B cell (primary cell): ENCODE measurements at regions of chr16 and their contacts with region 1.

Region 1: GRCh38 chr16:30065143-30065850 is at the start of gene ALDOA:
- DNase-seq: peak; percentile 97
- ATAC-seq: peak; percentile 83
- H3K4me3 ChIP-seq: peak within 1 kb of the TSS; percentile 73 to 96 (median 87)
- H3K4me3 Mint-ChIP-seq: peak within 1 kb of the TSS; percentile 100
- H3K27ac ChIP-seq: peak within 1 kb of the TSS; percentile 82 to 88
- H3K27ac Mint-ChIP-seq: peak within 1 kb of the TSS; percentile 99
- H3K4me1 ChIP-seq: peaks cover 16 to 42% of the 10 kb centered on the region in 2 donors
- H3K4me1 Mint-ChIP-seq: peaks cover 31% of the 10 kb centered on the region
- H3K27me3 ChIP-seq: no peaks in the 10 kb centered on the region
- H3K27me3 Mint-ChIP-seq: no peaks in the 10 kb centered on the region
- CTCF ChIP-seq: no peak
- total RNA-seq, gene ALDOA: 301 and 329 TPM in 2 replicates

Region 2: DNA sequence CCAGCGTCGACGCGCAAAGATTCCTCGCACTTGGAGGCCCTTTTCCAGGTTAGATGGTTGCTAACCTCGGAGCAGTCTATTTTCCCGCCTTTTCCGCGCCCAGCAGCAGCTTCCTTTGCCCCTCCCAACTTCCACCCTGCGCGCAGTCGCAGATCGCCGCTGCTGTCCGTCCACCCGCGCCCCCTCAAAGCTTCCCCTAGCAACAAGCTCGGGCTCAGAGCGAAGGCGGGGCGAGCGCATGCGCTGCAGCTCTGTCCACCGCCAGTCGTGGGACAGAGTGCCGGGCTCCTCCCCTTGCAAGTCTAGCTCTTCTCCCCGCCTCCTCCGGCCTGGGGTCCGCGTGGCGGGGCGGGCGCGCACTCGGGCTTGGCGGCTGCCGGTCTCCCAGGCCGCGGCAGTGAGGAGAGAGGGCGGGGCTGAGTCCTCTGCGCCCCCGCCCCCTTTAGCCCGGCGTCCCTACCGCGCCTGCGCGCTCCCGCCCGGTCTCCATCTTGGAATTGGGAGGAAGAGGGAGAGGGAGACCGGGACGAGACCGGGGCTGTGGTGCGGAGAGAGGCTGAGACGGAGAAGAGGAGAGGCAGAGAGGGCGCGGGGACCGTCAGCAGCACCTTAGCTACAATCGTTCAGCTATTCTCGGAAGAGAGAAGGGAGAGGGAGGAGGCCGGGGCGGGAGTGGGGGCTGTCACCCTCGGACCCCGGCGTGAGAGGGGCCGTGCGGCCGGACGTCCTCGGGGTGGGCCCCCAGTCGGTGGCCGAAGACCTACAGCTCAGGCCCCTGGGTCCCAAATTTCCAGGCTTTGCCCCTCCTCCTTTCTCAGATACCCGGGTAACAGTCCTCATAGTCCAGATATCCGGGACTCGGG is 91.7 kb before region 1 on chr16 and contains the start of gene TAOK2:
- CTCF ChIA-PET with region 1: no interaction called
- POLR2A ChIA-PET with region 1: no interaction called
- intact Hi-C with region 1: loop called (anchors 1 kb)
- DNase-seq: peak; percentile 98
- ATAC-seq: peak; percentile 99
- H3K4me3 ChIP-seq: peak within 1 kb of the TSS; percentile 79 to 100 (median 99)
- H3K4me3 Mint-ChIP-seq: peak within 1 kb of the TSS; percentile 95
- H3K27ac ChIP-seq: peak within 1 kb of the TSS; percentile 73 to 79
- H3K27ac Mint-ChIP-seq: peak within 1 kb of the TSS; percentile 94
- H3K4me1 ChIP-seq: peaks cover 31 to 38% of the 10 kb centered on the region in 2 donors
- H3K4me1 Mint-ChIP-seq: peaks cover 36% of the 10 kb centered on the region
- H3K27me3 ChIP-seq: no peaks in the 10 kb centered on the region
- H3K27me3 Mint-ChIP-seq: no peaks in the 10 kb centered on the region
- CTCF ChIP-seq: no peak
- total RNA-seq, gene TAOK2: 50.8 and 51.9 TPM in 2 replicates

Region 3: GRCh38 chr16:29995911-29996772 is 69.2 kb before region 1 on chr16 and contains the start of gene INO80E:
- CTCF ChIA-PET with region 1: interaction called, 3 read pairs
- POLR2A ChIA-PET with region 1: no interaction called
- intact Hi-C with region 1: loop called (anchors 2 kb)
- DNase-seq: peak; percentile 97
- ATAC-seq: peak; percentile 96
- H3K4me3 ChIP-seq: peak within 1 kb of the TSS; percentile 89 to 100 (median 98)
- H3K4me3 Mint-ChIP-seq: peak within 1 kb of the TSS; percentile 98
- H3K27ac ChIP-seq: peak within 1 kb of the TSS; percentile 94 to 97
- H3K27ac Mint-ChIP-seq: peak within 1 kb of the TSS; percentile 94
- H3K4me1 ChIP-seq: peaks cover 15 to 22% of the 10 kb centered on the region in 2 donors
- H3K4me1 Mint-ChIP-seq: peaks cover 43% of the 10 kb centered on the region
- H3K27me3 ChIP-seq: no peaks in the 10 kb centered on the region
- H3K27me3 Mint-ChIP-seq: no peaks in the 10 kb centered on the region
- CTCF ChIP-seq: no peak
- total RNA-seq, gene INO80E: 113 and 119 TPM in 2 replicates

Region 4: DNA sequence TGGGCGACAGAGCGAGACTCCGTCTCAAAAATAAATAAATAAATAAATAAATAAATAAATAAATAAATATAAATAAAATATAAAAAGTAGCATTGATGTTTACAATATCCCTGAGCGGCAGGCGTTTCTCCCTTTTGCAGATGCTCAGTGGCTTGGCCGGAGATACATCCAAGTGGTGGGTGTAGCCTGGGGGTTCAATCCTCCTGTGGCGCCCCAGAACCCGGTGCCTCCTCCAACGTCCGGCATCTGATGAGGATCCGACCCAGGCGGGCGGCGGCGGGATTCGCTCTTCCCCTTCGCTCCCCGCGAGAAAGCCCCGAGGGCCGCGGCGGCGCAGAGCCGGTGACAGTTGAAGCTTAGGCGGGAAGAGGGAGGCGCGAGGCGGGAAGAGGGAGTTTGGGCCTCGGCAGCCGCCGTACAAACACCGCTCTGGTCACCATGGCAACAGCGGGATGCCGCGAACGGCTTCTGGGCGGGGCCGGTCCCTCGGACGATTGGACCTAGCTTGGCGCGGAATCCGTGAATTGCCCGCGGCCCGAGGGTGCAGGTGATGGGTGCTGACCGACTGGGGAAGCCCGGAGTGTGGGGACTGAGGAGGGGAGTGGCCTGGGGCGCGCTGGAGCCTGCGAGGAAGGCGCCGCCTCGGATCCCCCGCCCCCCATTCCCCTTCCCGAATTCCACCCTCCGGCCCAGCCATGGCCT is 12.5 kb before region 1 on chr16:
- CTCF ChIA-PET with region 1: interaction called, 4 read pairs
- POLR2A ChIA-PET with region 1: interaction called, 8 read pairs
- intact Hi-C with region 1: loop called (anchors 1 kb)
- DNase-seq: peak; percentile 92
- ATAC-seq: peak; percentile 87
- H3K4me3 ChIP-seq: peak overlapping the region; percentile 9 to 70 (median 63)
- H3K4me3 Mint-ChIP-seq: peak overlapping the region; percentile 87
- H3K27ac ChIP-seq: peak overlapping the region in 1 of 2 donors; percentile 5
- H3K27ac Mint-ChIP-seq: peak overlapping the region; percentile 82
- H3K4me1 ChIP-seq: peaks cover 5 to 12% of the 10 kb centered on the region in 2 donors
- H3K4me1 Mint-ChIP-seq: peaks cover 13% of the 10 kb centered on the region
- H3K27me3 ChIP-seq: peaks cover 0 to 3% (median 0%) of the 10 kb centered on the region in 4 experiments
- H3K27me3 Mint-ChIP-seq: no peaks in the 10 kb centered on the region
- CTCF ChIP-seq: no peak

Region 5: DNA sequence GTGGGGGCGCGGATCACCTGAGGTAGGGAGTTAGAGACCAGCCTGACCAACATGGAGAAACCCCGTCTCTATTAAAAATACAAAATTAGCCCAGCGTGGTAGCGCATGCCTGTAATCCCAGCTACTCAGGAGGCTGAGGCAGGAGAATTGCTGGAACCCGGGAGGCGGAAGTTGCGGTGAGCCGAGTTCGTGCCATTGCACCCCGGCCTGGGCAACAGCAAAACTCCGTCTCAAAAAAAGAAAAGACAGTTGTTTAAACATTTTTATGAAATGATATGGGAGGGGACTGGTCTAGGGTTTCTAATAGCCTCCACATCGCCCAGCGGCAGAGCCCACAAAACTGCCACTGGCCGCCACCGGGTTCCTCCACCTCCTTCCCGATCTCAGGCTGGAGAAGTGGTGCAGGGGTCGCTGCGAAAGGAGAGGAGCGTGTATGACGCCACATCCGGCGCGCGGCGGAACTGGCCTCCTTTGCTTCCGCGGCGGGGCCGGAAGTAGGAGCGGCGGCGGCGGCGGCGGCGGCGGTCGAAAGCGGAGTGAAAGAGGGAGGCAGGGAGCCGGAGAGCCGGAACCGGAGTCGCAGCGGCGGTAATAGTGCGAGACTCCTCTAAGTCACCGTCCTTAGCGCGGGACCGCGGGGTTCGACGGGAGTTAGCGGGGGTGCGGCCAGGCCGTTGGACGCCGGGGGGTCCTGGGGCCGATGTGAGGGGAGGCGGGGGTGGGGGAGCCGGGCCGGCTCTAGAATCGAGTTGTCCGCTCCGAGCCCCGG is 10.4 kb after region 1 on chr16 and contains the start of gene PPP4C:
- CTCF ChIA-PET with region 1: interaction called, 5 read pairs
- POLR2A ChIA-PET with region 1: interaction called, 7 read pairs
- intact Hi-C with region 1: loop called (anchors 1 kb)
- DNase-seq: peak; percentile 93
- ATAC-seq: peak; percentile 89
- H3K4me3 ChIP-seq: peak within 1 kb of the TSS; percentile 65 to 98 (median 90)
- H3K4me3 Mint-ChIP-seq: peak within 1 kb of the TSS; percentile 98
- H3K27ac ChIP-seq: peak within 1 kb of the TSS; percentile 67 to 90
- H3K27ac Mint-ChIP-seq: peak within 1 kb of the TSS; percentile 98
- H3K4me1 ChIP-seq: peaks cover 14 to 25% of the 10 kb centered on the region in 2 donors
- H3K4me1 Mint-ChIP-seq: peaks cover 31% of the 10 kb centered on the region
- H3K27me3 ChIP-seq: no peaks in the 10 kb centered on the region
- H3K27me3 Mint-ChIP-seq: no peaks in the 10 kb centered on the region
- CTCF ChIP-seq: no peak
- total RNA-seq, gene PPP4C: 89.0 and 93.3 TPM in 2 replicates

Region 6: DNA sequence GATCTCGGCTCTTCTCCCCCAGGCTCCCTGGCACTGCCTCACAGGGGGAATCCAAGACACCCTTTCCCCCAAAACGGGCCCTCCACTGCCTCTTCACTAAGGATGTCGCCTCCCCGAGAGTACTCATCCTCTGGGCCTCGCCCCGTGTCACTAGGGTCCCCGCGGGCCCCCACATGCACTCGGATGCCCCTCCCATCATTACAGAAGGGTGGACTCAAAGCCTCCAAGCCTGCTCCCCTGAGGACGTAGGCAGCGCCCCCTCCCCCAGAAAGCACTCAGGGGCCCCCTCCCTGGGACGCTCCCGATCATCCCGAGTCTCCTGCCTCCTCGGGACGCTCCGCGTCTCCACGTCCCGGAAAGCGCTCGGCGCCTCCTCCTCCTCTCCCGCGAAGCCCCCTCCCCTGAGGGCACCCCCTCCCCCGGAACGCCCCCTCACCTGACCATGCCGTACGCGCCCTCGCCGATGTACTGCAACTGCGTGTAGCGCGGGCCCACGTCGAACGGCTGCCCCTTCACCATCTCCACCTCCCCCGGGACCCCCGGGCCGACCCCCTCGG is 57.4 kb after region 1 on chr16:
- CTCF ChIA-PET with region 1: no interaction called
- POLR2A ChIA-PET with region 1: no interaction called
- intact Hi-C with region 1: loop called (anchors 2 kb)
- DNase-seq: peak; percentile 50
- ATAC-seq: peak; percentile 9
- H3K4me3 ChIP-seq: peak overlapping the region; percentile 38 to 79 (median 75)
- H3K4me3 Mint-ChIP-seq: peak overlapping the region; percentile 86
- H3K27ac ChIP-seq: peak overlapping the region; percentile 38 to 74
- H3K27ac Mint-ChIP-seq: peak overlapping the region; percentile 81
- H3K4me1 ChIP-seq: peaks cover 18 to 24% of the 10 kb centered on the region in 2 donors
- H3K4me1 Mint-ChIP-seq: peaks cover 24% of the 10 kb centered on the region
- H3K27me3 ChIP-seq: no peaks in the 10 kb centered on the region
- H3K27me3 Mint-ChIP-seq: no peaks in the 10 kb centered on the region
- CTCF ChIP-seq: no peak

Region 7: DNA sequence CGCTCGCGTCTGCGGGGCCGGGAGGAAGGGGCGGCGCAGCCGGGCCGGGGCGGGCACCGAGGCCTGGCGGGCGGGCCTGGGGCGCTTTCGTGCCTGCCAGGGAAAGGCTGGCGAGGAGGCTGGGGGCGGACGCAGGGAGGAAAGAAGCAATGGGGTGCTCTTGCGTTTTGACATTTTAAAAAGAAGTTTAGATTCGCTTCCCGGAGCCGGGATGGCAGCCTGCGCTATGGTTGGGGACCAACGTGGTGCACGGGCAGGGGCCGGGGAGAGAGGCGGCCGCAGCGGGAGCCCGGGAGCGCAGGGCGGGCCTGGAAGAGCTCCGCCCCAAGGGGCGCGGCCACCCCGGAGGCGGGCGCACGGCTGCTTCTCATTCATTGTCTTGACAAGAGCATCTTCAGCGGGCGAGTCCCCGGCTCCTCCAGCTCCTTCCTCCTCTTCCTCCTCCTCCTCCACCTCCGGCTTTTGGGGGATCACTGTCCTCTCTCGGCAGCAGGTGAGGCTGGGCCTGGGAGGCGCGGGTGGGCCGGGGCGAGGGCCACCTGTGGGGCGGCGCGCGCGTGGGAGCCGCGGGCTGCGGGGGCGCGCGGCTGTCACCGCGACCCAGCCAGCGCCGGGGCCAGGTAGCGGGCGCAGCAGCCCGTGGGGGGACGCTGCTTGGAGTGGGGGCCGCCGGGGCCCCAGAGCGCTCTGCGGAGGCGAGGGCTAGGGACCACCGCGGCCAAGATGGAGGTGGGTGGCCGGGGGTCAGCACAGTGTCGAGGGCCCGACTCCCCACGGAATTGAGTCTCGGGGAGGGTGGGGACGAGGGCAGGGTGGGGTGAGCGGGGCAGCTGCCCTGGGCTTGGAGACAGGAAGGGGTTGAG is 118.2 kb after region 1 on chr16 and contains the start of gene CORO1A:
- CTCF ChIA-PET with region 1: interaction called, 4 read pairs
- POLR2A ChIA-PET with region 1: interaction called, 27 read pairs
- intact Hi-C with region 1: no loop called
- DNase-seq: peak; percentile 91
- ATAC-seq: peak; percentile 62
- H3K4me3 ChIP-seq: peak within 1 kb of the TSS; percentile 54 to 99 (median 97)
- H3K4me3 Mint-ChIP-seq: peak within 1 kb of the TSS; percentile 90
- H3K27ac ChIP-seq: peak within 1 kb of the TSS; percentile 78 to 87
- H3K27ac Mint-ChIP-seq: peak within 1 kb of the TSS; percentile 99
- H3K4me1 ChIP-seq: peaks cover 40 to 48% of the 10 kb centered on the region in 2 donors
- H3K4me1 Mint-ChIP-seq: peaks cover 46% of the 10 kb centered on the region
- H3K27me3 ChIP-seq: no peaks in the 10 kb centered on the region
- H3K27me3 Mint-ChIP-seq: no peaks in the 10 kb centered on the region
- CTCF ChIP-seq: no peak
- total RNA-seq, gene CORO1A: 653 and 662 TPM in 2 replicates